Activated CD4-positive, alpha-beta memory T cell treated with anti-CD3 and anti-CD28 coated beads for 36 hours (primary cell): ENCODE measurements at regions of chr16 and their contacts with region 1.

Region 1: GRCh38 chr16:67150833-67151396 is at the start of gene B3GNT9:
- DNase-seq: peak; percentile 65
- H3K4me3 Mint-ChIP-seq: peak within 1 kb of the TSS; percentile 68
- H3K27ac Mint-ChIP-seq: peak within 1 kb of the TSS; percentile 38
- H3K4me1 Mint-ChIP-seq: peaks cover 29% of the 10 kb centered on the region
- H3K27me3 Mint-ChIP-seq: no peaks in the 10 kb centered on the region
- total RNA-seq, gene B3GNT9: 5.1 to 5.6 TPM

Region 2: GRCh38 chr16:67173808-67174705 is 23.1 kb after region 1 on chr16:
- CTCF ChIA-PET with region 1: interaction called, 39 read pairs
- POLR2A ChIA-PET with region 1: no interaction called
- intact Hi-C with region 1: loop called (anchors 1 kb)
- DNase-seq: peak; percentile 79
- H3K4me3 Mint-ChIP-seq: peak overlapping the region; percentile 64
- H3K27ac Mint-ChIP-seq: no peak overlapping the region
- H3K4me1 Mint-ChIP-seq: peaks cover 42% of the 10 kb centered on the region
- H3K27me3 Mint-ChIP-seq: peaks cover 25% of the 10 kb centered on the region

Region 3: DNA sequence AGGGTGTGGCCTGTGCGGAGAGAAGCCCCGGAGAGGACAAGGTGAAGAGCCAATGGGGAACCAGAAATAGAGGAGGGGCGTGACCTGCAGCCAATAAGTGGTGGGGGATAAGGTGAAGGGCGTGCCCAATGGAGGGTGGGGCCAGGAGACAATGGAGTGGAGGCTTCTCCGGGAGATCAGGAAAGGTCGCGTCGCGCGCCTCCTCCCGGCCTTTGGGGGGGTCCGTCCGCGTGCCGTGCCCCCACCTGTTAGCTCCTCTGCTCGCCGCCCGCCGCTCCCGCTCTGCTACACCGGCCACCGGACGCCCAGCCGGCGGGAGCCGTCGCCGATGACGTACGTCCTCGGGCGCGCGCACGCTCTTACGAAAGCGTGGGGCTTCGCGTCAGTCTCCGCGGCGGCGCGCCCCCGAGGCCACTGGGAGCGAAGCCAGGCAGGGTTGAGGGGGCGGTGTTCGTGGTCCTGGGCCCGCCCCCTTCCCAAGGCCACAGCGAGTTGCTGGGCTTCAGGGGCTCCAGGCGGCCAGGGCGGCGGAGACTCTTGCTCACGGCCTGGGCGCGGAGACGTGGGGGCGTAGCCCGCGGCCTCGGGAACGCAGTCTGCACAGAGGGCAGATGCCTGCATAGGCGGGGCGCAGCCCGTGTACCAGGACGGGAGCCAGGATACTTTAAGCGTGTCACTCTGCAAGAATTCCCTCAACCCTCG is 32.9 kb after region 1 on chr16 and contains the start of gene MATCAP1:
- CTCF ChIA-PET with region 1: interaction called, 17 read pairs
- POLR2A ChIA-PET with region 1: no interaction called
- intact Hi-C with region 1: no loop called
- DNase-seq: peak; percentile 96
- H3K4me3 Mint-ChIP-seq: no peak within 1 kb of the TSS
- H3K27ac Mint-ChIP-seq: no peak within 1 kb of the TSS
- H3K4me1 Mint-ChIP-seq: peaks cover 14% of the 10 kb centered on the region
- H3K27me3 Mint-ChIP-seq: peaks cover 8% of the 10 kb centered on the region
- total RNA-seq, gene MATCAP1: 37.3 to 38.3 TPM